ENCODE measurements at regions of chr5 and their contacts with region 1.

Region 1: DNA sequence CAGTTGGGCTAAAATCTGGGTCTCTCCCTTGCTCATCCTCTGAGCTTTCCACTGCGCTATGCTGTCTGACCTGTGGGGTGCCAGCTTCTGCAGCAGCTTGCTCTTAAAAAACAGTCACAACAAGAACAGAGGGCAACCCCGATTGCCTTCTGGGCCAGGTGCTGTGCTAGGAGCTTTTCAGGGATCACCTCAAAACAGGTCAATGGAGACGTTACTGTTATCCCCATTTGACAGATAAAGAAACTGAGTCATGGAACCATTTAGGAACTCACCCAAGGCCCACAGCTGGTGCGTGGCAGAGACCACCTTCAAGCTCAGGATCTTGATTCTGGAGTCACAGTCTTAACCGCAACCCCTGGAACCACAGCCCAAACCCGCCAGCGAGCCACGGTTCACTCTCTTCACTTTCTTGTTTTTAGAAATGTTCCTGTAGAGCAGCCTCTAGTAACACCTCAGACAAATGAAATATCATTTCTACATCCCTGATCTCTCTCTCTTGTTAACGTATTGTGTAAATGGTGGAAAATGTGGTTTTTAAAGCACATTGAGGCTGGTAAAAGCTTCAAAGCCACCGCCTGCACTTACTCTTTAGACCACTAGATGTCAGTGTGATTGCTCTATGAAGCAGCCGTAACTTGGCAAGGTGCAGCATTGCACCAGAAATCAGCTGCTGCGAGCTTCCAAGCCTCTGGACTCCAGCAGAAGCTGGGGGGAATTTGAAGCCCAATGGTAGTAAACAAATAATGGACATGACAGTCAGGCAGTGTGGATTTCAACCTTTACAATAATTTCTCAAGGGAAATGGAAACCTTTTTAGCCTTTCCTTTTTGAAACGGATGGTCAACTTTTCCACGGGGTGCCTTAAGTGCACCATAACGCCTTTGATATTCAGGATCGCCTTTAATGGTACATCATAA is 1.7 kb downstream of the FYB1 start:
- DNase-seq: peak; percentile 87
- H3K4me3 Mint-ChIP-seq: peak overlapping the region; percentile 83
- H3K27ac Mint-ChIP-seq: peak overlapping the region; percentile 96
- H3K4me1 Mint-ChIP-seq: peaks cover 69% of the 10 kb centered on the region
- H3K27me3 Mint-ChIP-seq: no peaks in the 10 kb centered on the region

Region 2: GRCh38 chr5:38938424-38938823 is 279.2 kb before region 1 on chr5:
- CTCF ChIA-PET with region 1: no interaction called
- POLR2A ChIA-PET with region 1: no interaction called
- intact Hi-C with region 1: no loop called
- DNase-seq: no peak
- H3K4me3 Mint-ChIP-seq: no peak overlapping the region
- H3K27ac Mint-ChIP-seq: no peak overlapping the region
- H3K4me1 Mint-ChIP-seq: no peaks in the 10 kb centered on the region
- H3K27me3 Mint-ChIP-seq: no peaks in the 10 kb centered on the region

Region 3: GRCh38 chr5:39074016-39074886 is 143.4 kb before region 1 on chr5 and contains the start of gene RICTOR:
- CTCF ChIA-PET with region 1: interaction called, 11 read pairs
- POLR2A ChIA-PET with region 1: no interaction called
- intact Hi-C with region 1: loop called (anchors 2 kb)
- DNase-seq: peak; percentile 95
- H3K4me3 Mint-ChIP-seq: peak within 1 kb of the TSS; percentile 97
- H3K27ac Mint-ChIP-seq: peak within 1 kb of the TSS; percentile 96
- H3K4me1 Mint-ChIP-seq: peaks cover 28% of the 10 kb centered on the region
- H3K27me3 Mint-ChIP-seq: peaks cover 18% of the 10 kb centered on the region
- total RNA-seq, gene RICTOR: 27.7 to 27.8 TPM

Region 4: GRCh38 chr5:39158127-39158593 is 59.5 kb before region 1 on chr5:
- CTCF ChIA-PET with region 1: interaction called, 34 read pairs
- POLR2A ChIA-PET with region 1: interaction called, 12 read pairs
- intact Hi-C with region 1: no loop called
- DNase-seq: peak; percentile 56
- H3K4me3 Mint-ChIP-seq: peak overlapping the region; percentile 71
- H3K27ac Mint-ChIP-seq: peak overlapping the region; percentile 90
- H3K4me1 Mint-ChIP-seq: peaks cover 69% of the 10 kb centered on the region
- H3K27me3 Mint-ChIP-seq: no peaks in the 10 kb centered on the region

Region 5: GRCh38 chr5:39187831-39188731 is 29.5 kb before region 1 on chr5:
- CTCF ChIA-PET with region 1: interaction called, 27 read pairs
- POLR2A ChIA-PET with region 1: interaction called, 16 read pairs
- intact Hi-C with region 1: no loop called
- DNase-seq: no peak
- H3K4me3 Mint-ChIP-seq: peak overlapping the region; percentile 69
- H3K27ac Mint-ChIP-seq: peak overlapping the region; percentile 92
- H3K4me1 Mint-ChIP-seq: peaks cover 79% of the 10 kb centered on the region
- H3K27me3 Mint-ChIP-seq: no peaks in the 10 kb centered on the region

Region 6: GRCh38 chr5:39231705-39232525 is 14.3 kb after region 1 on chr5:
- CTCF ChIA-PET with region 1: interaction called, 99 read pairs
- POLR2A ChIA-PET with region 1: interaction called, 16 read pairs
- intact Hi-C with region 1: loop called (anchors 1 kb)
- DNase-seq: peak; percentile 75
- H3K4me3 Mint-ChIP-seq: peak overlapping the region; percentile 70
- H3K27ac Mint-ChIP-seq: peak overlapping the region; percentile 97
- H3K4me1 Mint-ChIP-seq: peaks cover 14% of the 10 kb centered on the region
- H3K27me3 Mint-ChIP-seq: no peaks in the 10 kb centered on the region

Region 7: GRCh38 chr5:39274398-39275085 is 56.9 kb after region 1 on chr5:
- CTCF ChIA-PET with region 1: interaction called, 195 read pairs
- POLR2A ChIA-PET with region 1: interaction called, 4 read pairs
- intact Hi-C with region 1: loop called (anchors 2 kb)
- DNase-seq: no peak
- H3K4me3 Mint-ChIP-seq: peak overlapping the region; percentile 74
- H3K27ac Mint-ChIP-seq: peak overlapping the region; percentile 95
- H3K4me1 Mint-ChIP-seq: peaks cover 53% of the 10 kb centered on the region
- H3K27me3 Mint-ChIP-seq: no peaks in the 10 kb centered on the region

Region 8: DNA sequence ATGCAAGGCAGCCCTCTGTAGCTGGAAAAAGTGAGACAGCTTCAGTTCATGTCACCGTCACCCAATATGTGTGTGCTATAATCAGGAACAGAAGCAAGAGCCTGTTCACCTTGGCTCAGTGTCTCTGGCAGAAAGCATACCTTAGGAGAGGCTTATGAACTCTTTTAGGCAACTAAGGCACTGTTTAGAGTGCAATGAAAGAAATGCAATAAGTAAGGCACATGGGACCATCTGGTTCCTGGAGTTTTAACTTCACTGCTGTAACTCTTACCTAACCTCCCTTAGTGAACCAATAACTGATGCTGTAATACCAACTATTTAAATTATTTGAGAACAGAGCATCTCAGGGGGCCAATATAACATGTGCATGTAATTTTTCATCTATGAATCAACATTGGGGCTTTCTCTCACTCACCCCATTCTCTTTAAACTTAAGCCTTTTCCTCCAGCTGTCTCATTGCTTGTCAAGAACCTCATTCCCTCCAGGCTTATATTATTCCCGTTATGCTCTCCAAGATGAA is 114.3 kb after region 1 on chr5:
- CTCF ChIA-PET with region 1: no interaction called
- POLR2A ChIA-PET with region 1: no interaction called
- intact Hi-C with region 1: no loop called
- DNase-seq: no peak
- H3K4me3 Mint-ChIP-seq: no peak overlapping the region
- H3K27ac Mint-ChIP-seq: no peak overlapping the region
- H3K4me1 Mint-ChIP-seq: no peaks in the 10 kb centered on the region
- H3K27me3 Mint-ChIP-seq: peaks cover 3% of the 10 kb centered on the region

Region 9: DNA sequence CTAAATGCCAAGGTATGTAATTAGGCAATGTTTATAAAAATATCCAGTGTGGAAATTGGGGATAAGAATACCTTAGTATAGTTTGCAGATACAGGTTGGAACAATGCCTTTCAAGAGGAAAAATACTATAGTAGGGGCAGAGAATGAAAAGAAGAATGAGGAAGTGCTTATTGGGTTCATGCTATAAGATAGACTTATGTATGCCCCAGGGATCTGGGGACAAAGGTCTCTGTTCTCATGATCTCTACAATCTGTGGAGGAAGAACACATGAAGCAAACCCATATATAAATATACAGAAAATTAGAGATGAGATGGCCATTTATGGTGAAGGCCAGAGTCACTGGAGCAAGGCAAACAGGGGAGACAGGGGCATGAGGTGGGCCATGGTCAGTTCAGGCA is 313.7 kb after region 1 on chr5:
- CTCF ChIA-PET with region 1: no interaction called
- POLR2A ChIA-PET with region 1: no interaction called
- intact Hi-C with region 1: no loop called
- DNase-seq: no peak
- H3K4me3 Mint-ChIP-seq: no peak overlapping the region
- H3K27ac Mint-ChIP-seq: no peak overlapping the region
- H3K4me1 Mint-ChIP-seq: no peaks in the 10 kb centered on the region
- H3K27me3 Mint-ChIP-seq: peaks cover 8% of the 10 kb centered on the region

Region 10: GRCh38 chr5:39547553-39548154 is 330.0 kb after region 1 on chr5:
- CTCF ChIA-PET with region 1: interaction called, 15 read pairs
- POLR2A ChIA-PET with region 1: no interaction called
- intact Hi-C with region 1: loop called (anchors 2 kb)
- DNase-seq: no peak
- H3K4me3 Mint-ChIP-seq: no peak overlapping the region
- H3K27ac Mint-ChIP-seq: no peak overlapping the region
- H3K4me1 Mint-ChIP-seq: peaks cover 7% of the 10 kb centered on the region
- H3K27me3 Mint-ChIP-seq: peaks cover 4% of the 10 kb centered on the region